Dorsolateral prefrontal cortex (tissue), 120 donors: ENCODE measurements at regions of chr11 and their contacts with region 1.

Region 1: DNA sequence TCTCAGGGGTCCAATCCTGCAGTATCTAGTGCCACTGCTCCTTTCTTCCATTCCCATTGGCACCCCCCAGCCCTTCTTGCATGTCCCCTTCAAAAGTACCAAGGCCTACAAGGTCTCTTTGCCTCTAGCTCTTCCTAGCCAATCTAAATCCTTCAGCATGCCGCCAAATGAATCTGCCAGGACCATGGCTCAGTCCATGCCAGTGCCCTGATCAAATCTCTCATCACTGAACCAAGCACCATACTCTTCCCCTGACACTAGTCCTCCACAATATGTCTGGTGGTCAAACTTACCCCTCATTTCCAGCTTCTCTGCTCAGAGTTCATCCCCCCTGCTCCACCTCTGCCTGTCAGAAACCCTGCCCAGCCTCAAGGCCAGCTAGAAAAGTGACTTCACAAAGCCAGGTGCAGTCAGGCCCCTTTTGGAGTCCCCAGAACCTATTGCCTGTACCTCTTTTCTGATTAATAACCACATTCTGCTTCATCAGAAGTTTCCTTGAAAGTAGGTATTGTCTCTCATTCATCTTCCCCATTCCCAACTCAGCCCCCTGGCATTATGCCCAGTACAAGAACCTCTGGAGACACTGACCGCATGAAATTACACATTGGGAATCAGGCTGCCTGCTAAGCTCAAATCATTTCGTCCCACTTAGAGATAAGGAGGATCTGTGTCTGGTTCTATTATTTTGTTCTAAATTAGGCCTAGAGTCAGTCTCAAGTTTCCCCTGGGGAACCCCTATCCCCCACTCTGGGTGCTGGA is 11.4 kb downstream of the FEN1 start:
- DNase-seq: peak in 1 of 10 donors; percentile 12
- H3K4me3 ChIP-seq: no peak overlapping the region
- H3K27ac ChIP-seq: peak overlapping the region in 11 of 59 donors; percentile 9 to 56 (median 35)
- H3K27me3 ChIP-seq: no peaks in the 10 kb centered on the region
- CTCF ChIP-seq: no peak

Region 2: GRCh38 chr11:61891331-61892084 is 87.4 kb after region 1 on chr11 and contains the start of gene FADS3:
- intact Hi-C with region 1: loop called (anchors 5 kb)
- DNase-seq: peak; percentile 66 to 90 (median 76)
- H3K4me3 ChIP-seq: peak within 1 kb of the TSS; percentile 52 to 97 (median 87)
- H3K27ac ChIP-seq: peak within 1 kb of the TSS; percentile 3 to 96 (median 91)
- H3K27me3 ChIP-seq: no peaks in the 10 kb centered on the region
- CTCF ChIP-seq: peak in 18 of 56 donors; percentile 3 to 59 (median 21)
- total RNA-seq, gene FADS3: 52.0 to 134 (median 87.6) TPM

Region 3: GRCh38 chr11:61917341-61918109 is 113.5 kb after region 1 on chr11 and contains the start of gene RAB3IL1:
- intact Hi-C with region 1: no loop called
- DNase-seq: peak in 6 of 10 donors; percentile 18 to 80 (median 50)
- H3K4me3 ChIP-seq: peak within 1 kb of the TSS; percentile 48 to 87 (median 71)
- H3K27ac ChIP-seq: peak within 1 kb of the TSS in 48 of 59 donors; percentile 6 to 84 (median 60)
- H3K27me3 ChIP-seq: no peaks in the 10 kb centered on the region
- CTCF ChIP-seq: peak in 1 of 56 donors; percentile 14
- total RNA-seq, gene RAB3IL1: 5.8 to 23.3 (median 10.7) TPM